IMR-90 (cell line): ENCODE measurements at regions of chr13 and their contacts with region 1.

Region 1: DNA sequence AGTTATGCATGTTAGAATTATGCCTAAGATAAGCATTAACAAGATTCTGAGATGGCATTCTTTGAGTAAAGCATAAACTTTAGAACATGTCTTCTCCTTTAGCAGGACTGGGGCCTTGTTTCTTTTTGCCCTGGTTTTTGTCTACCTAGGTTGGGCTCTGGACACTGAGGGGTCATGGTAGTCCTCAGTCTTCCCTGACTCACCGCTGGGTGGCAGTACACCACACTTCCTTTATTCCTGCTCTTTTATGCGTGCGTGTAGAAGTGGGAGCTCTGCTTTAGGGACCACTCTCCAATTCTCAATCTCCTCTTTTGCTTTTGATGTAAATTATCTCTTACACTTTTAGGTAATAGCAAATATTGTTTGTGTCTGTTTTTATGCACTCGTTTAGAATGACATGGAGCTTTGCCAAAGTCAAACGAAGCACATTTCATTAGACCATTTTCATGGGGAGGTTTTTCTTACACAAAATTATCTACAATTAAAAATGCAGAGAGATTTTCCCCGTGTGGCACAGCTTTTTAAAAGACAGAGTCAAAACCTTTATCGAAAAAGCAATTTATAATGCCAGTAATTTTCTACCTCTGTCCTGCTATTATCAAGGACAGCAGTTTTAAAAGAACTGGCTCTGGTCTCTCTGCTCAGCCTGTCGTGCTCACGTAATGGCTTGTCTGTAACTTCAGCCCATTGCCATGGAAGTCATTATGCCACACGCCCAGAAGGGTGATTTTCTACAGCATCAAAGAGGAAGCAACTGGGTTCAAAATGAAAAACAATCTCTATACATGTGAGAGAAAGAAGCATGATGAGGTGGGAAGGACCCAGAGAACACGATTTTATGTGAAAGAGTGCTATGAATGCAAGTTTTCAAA is 413.9 kb downstream of the COG6 start:
- DNase-seq: peak; percentile 46
- ATAC-seq: peak; percentile 85
- H3K4me3 ChIP-seq: no peak overlapping the region
- H3K27ac ChIP-seq: no peak overlapping the region
- H3K4me1 ChIP-seq: no peaks in the 10 kb centered on the region
- H3K27me3 ChIP-seq: no peaks in the 10 kb centered on the region
- CTCF ChIP-seq: peak; percentile 58
- POLR2A ChIP-seq: no peak
- RAD21 ChIP-seq: peak; percentile 58

Region 2: GRCh38 chr13:40777166-40777808 is 707.9 kb after region 1 on chr13:
- CTCF ChIA-PET with region 1: no interaction called
- POLR2A ChIA-PET with region 1: no interaction called
- dilution Hi-C with region 1: no loop called
- in situ Hi-C with region 1: no loop called
- intact Hi-C with region 1: loop called (anchors 2 kb)
- DNase-seq: peak; percentile 37
- ATAC-seq: peak; percentile 88
- H3K4me3 ChIP-seq: no peak overlapping the region
- H3K27ac ChIP-seq: no peak overlapping the region
- H3K4me1 ChIP-seq: peaks cover 5% of the 10 kb centered on the region
- H3K27me3 ChIP-seq: no peaks in the 10 kb centered on the region
- CTCF ChIP-seq: peak; percentile 39
- POLR2A ChIP-seq: no peak
- RAD21 ChIP-seq: peak; percentile 37; the same call in 1 of the 2 replicates